CD4-positive, alpha-beta memory T cell (primary cell): ENCODE measurements at regions of chr6 and their contacts with region 1.

Region 1: DNA sequence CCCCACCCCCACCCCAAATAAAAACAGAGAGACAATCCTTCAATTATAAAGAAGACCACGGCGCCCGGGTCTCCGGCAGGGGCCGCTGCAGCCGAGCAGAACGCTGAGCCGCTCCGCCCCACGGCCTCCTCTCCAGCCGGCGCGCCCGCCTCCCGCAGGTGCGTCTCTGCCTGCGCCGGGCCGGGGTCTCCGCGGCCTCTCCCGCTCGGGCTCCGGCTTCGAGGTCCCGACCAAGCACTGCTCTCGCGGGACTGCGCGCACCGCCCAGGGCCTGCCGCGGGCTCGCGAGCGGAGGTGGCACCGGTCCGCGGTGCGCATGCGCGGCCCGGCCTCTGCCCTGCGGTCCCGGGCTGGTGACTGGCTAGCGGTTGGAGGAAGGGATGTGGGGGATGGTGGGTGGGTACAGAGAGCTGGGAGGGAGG is 241 bp upstream of the SIRT5 start:
- DNase-seq: peak; percentile 94 to 97 (median 96)
- H3K4me3 ChIP-seq: peak overlapping the region; percentile 70 to 86
- H3K4me3 Mint-ChIP-seq: peak overlapping the region; percentile 92 to 98 (median 96)
- H3K27ac ChIP-seq: peak overlapping the region; percentile 89
- H3K27ac Mint-ChIP-seq: peak overlapping the region; percentile 96 to 99 (median 98)
- H3K4me1 ChIP-seq: peaks cover 16% of the 10 kb centered on the region
- H3K4me1 Mint-ChIP-seq: peaks cover 13 to 40% (median 24%) of the 10 kb centered on the region in 4 donors
- H3K27me3 ChIP-seq: no peaks in the 10 kb centered on the region
- H3K27me3 Mint-ChIP-seq: peaks cover 0 to 2% of the 10 kb centered on the region in 2 donors

Region 2: GRCh38 chr6:12119085-12119588 is 1455.0 kb before region 1 on chr6:
- CTCF ChIA-PET with region 1: no interaction called
- POLR2A ChIA-PET with region 1: no interaction called
- intact Hi-C with region 1: no loop called
- DNase-seq: peak; percentile 67 to 92 (median 76)
- H3K4me3 ChIP-seq: no peak overlapping the region
- H3K4me3 Mint-ChIP-seq: peak overlapping the region in 7 of 8 donors; percentile 26 to 64 (median 40)
- H3K27ac ChIP-seq: peak overlapping the region; percentile 31
- H3K27ac Mint-ChIP-seq: peak overlapping the region; percentile 67 to 93 (median 79)
- H3K4me1 ChIP-seq: peaks cover 41% of the 10 kb centered on the region
- H3K4me1 Mint-ChIP-seq: peaks cover 33 to 63% (median 49%) of the 10 kb centered on the region in 4 donors
- H3K27me3 ChIP-seq: no peaks in the 10 kb centered on the region
- H3K27me3 Mint-ChIP-seq: no peaks in the 10 kb centered on the region

Region 3: GRCh38 chr6:13336553-13336952 is 237.6 kb before region 1 on chr6:
- CTCF ChIA-PET with region 1: interaction called, 19 read pairs
- POLR2A ChIA-PET with region 1: interaction called, 3 read pairs
- intact Hi-C with region 1: loop called (anchors 1 kb)
- DNase-seq: peak; percentile 54 to 70 (median 63)
- H3K4me3 ChIP-seq: no peak overlapping the region
- H3K4me3 Mint-ChIP-seq: no peak overlapping the region
- H3K27ac ChIP-seq: no peak overlapping the region
- H3K27ac Mint-ChIP-seq: peak overlapping the region in 2 of 7 donors; percentile 1 to 13
- H3K4me1 ChIP-seq: no peaks in the 10 kb centered on the region
- H3K4me1 Mint-ChIP-seq: peaks cover 4 to 12% (median 6%) of the 10 kb centered on the region in 4 donors
- H3K27me3 ChIP-seq: no peaks in the 10 kb centered on the region
- H3K27me3 Mint-ChIP-seq: peaks cover 0 to 2% of the 10 kb centered on the region in 2 donors

Region 4: DNA sequence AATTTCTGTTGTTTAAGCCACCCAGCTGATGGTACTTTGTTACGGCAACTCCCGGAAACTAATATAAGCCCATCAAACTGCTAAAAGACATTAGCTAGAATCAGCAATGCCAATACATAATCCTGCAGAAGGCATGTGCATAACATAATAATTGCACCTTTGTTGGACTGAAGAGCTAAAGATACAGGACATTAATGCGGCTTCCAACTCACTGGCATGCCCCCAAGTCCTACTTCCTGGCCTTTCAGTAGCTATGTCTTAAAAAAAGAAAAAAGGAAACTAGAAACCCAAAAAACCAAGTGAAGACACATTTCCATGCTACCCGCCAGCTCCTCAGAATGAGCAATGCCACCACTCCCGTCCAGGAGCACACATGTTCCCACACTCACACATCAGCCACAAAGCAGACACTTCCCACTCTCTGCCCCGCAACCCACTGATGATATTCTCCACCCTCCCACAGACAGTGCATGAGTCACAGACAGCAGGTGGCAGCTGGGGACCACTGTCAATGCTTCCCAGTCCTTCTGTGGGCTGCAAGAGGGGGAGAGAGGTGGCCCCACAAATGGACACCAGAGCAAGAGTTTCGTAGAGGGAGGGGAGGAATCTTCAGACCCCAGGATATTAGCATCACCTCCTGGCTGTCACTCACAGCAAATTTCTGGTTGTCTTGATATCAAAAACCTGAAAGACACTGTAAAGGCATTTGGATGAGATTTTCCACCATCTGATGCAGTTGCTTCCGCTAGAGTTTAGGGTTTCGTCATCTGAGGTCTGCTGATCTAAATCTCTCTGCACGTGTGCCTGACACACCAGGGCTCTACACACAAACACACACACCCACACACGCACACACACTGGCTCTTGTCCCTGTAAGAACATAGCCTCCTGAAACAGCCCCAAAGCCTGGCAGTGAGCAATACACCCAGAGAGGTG is 119.6 kb before region 1 on chr6:
- CTCF ChIA-PET with region 1: interaction called, 9 read pairs
- POLR2A ChIA-PET with region 1: interaction called, 12 read pairs
- intact Hi-C with region 1: loop called (anchors 1 kb)
- DNase-seq: peak; percentile 52 to 89 (median 59)
- H3K4me3 ChIP-seq: peak overlapping the region; percentile 17 to 45
- H3K4me3 Mint-ChIP-seq: peak overlapping the region; percentile 61 to 81 (median 76)
- H3K27ac ChIP-seq: peak overlapping the region; percentile 8
- H3K27ac Mint-ChIP-seq: peak overlapping the region; percentile 81 to 94 (median 86)
- H3K4me1 ChIP-seq: peaks cover 22% of the 10 kb centered on the region
- H3K4me1 Mint-ChIP-seq: peaks cover 12 to 23% (median 22%) of the 10 kb centered on the region in 4 donors
- H3K27me3 ChIP-seq: no peaks in the 10 kb centered on the region
- H3K27me3 Mint-ChIP-seq: no peaks in the 10 kb centered on the region

Region 5: DNA sequence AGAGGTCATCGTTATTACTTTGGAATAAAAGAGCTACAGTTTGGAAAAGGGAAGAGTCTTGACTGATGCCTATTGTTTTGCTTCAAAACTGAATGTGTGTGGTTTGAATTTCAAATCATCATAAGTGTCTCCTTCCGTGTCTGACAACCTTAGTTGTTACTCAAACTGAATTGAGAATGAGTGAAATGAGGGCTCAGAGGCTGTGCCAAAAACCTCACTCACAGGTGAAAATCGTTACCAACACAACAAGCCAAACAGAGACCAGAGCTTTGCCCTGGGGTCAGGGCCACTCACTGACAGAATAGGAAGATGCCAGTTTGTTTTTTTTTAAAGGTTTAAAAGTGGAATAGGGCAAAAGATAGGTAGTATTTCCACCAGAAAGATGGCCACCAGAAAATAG is 14.9 kb before region 1 on chr6:
- CTCF ChIA-PET with region 1: interaction called, 49 read pairs
- POLR2A ChIA-PET with region 1: interaction called, 4 read pairs
- intact Hi-C with region 1: no loop called
- DNase-seq: no peak
- H3K4me3 ChIP-seq: no peak overlapping the region
- H3K4me3 Mint-ChIP-seq: no peak overlapping the region
- H3K27ac ChIP-seq: no peak overlapping the region
- H3K27ac Mint-ChIP-seq: no peak overlapping the region
- H3K4me1 ChIP-seq: no peaks in the 10 kb centered on the region
- H3K4me1 Mint-ChIP-seq: no peaks in the 10 kb centered on the region
- H3K27me3 ChIP-seq: no peaks in the 10 kb centered on the region
- H3K27me3 Mint-ChIP-seq: no peaks in the 10 kb centered on the region

Region 6: GRCh38 chr6:13814176-13814937 is 240.2 kb after region 1 on chr6 and contains the start of gene MCUR1:
- CTCF ChIA-PET with region 1: interaction called, 4 read pairs
- POLR2A ChIA-PET with region 1: interaction called, 21 read pairs
- intact Hi-C with region 1: loop called (anchors 1 kb)
- DNase-seq: peak; percentile 77 to 83 (median 81)
- H3K4me3 ChIP-seq: peak within 1 kb of the TSS; percentile 34 to 78
- H3K4me3 Mint-ChIP-seq: peak within 1 kb of the TSS; percentile 88 to 93 (median 90)
- H3K27ac ChIP-seq: peak within 1 kb of the TSS; percentile 62
- H3K27ac Mint-ChIP-seq: peak within 1 kb of the TSS; percentile 82 to 92 (median 89)
- H3K4me1 ChIP-seq: peaks cover 28% of the 10 kb centered on the region
- H3K4me1 Mint-ChIP-seq: peaks cover 24 to 33% (median 31%) of the 10 kb centered on the region in 4 donors
- H3K27me3 ChIP-seq: no peaks in the 10 kb centered on the region
- H3K27me3 Mint-ChIP-seq: no peaks in the 10 kb centered on the region
- total RNA-seq, gene MCUR1: 11.3 to 11.5 TPM

Region 7: DNA sequence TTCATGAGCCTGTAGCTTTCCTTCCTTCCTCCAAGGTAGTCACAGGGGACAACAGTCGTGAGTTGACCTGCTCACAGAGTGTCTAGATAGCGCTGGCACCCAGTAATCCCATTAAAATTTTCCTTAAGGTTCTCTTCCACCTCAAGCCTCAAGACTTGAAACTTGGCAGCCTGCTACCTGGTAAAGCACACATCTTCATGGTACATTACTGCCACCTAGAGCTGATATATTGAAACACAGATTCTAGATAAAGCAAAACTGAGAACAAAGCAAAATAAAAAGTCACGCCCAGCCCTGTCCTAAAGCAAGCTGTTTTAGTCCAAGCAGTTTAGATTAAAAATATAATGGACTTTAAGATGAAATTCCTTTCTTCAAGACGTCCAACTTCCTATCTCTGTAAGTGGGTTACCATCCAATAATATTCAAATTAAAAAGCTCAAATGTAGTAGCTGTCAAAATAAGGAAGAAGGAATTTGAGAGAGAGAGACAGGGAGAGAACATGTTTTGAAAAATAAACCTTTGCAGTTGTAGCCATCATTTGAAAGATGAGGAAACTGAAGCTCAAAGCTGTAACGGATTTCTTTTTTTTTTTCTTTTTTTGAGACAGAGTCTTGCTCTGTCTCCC is 492.7 kb after region 1 on chr6:
- CTCF ChIA-PET with region 1: interaction called, 4 read pairs
- POLR2A ChIA-PET with region 1: no interaction called
- intact Hi-C with region 1: loop called (anchors 5 kb)
- DNase-seq: peak in 4 of 5 donors; percentile 47 to 52 (median 50)
- H3K4me3 ChIP-seq: no peak overlapping the region
- H3K4me3 Mint-ChIP-seq: no peak overlapping the region
- H3K27ac ChIP-seq: no peak overlapping the region
- H3K27ac Mint-ChIP-seq: no peak overlapping the region
- H3K4me1 ChIP-seq: no peaks in the 10 kb centered on the region
- H3K4me1 Mint-ChIP-seq: peaks cover 0 to 5% (median 2%) of the 10 kb centered on the region in 4 donors
- H3K27me3 ChIP-seq: no peaks in the 10 kb centered on the region
- H3K27me3 Mint-ChIP-seq: peaks cover 10 to 15% of the 10 kb centered on the region in 2 donors